ENCODE measurements at regions of chr2 and their contacts with region 1.

Region 1: GRCh38 chr2:238370823-238371372 is 50.6 kb downstream of the TRAF3IP1 start:
- DNase-seq: peak; percentile 62
- CTCF ChIP-seq: peak; percentile 81

Region 2: DNA sequence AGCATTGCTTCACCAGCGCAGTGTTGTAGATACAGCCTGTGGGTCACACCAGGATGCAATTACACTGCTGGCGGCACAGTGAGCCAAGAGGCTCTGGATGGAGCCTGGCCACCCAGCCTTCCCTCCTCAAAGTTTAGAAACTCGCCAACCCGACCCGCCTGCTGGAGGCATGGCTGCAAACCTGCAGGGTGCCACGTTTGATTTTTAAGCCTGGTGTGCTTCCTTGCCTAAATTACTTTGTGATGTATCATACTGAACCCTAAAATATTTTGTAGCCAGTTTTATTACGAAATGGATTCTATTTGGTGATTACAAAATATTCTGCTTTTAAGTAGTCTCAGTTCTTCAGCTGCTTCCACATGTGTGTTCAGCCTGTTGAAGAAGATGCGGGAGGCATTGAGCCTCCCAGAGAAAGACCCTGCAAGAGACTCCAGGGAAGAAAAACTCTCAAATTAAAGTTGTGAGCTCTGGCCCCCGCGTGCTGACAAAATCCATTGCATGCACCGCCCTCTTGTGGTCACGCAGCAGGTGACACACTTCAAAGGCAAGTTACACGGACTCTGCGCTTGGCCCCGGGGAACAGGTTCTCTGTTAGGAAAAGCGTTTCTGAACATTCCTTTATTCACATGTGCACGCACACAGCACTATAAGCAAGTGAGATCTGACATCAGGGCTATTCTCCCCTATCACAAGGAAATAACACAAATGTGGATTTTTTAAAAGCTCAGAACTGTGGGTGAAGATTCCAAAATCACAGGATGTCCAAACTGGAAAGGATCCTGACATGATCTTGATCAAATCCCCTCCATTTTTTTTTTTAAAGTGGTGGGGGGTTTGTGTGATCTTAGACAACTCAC is 414.0 kb after region 1 on chr2:
- in situ Hi-C with region 1: loop called (anchors 25 kb)
- DNase-seq: peak; percentile 76
- CTCF ChIP-seq: peak; percentile 90